ENCODE measurements at regions of chr17 and their contacts with region 1.

Region 1: DNA sequence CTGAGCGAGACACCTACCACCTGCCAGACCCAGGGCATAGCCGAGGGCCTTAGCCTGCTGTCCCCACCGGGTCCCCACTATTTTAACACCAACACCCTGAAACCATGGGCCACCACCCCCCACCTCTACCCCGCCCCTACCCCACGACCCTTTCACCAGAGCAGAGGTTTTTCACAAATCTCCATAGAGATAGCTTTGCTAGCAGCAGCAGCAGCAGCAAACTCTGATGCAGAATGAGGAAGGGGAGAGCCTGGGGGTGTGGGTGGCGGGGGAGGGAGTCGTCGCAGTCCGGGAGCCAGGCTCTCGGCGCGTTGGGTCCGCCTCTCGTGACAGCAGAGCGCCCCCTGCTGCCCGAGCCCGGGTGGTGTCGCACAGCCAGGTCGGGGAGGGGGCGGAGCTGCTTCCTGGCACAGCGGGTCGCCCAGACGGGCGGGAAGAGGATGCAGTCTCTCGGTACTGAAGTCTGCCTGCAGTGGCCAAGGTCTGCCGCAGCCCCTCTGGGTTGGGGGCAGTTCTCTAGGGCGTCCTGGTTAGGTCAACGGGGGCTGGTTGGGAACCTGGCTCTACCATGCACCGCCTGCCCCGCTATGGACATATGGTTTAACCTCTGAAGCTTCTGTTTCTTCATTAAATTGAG is 38.1 kb upstream of the CCDC182 start:
- DNase-seq: peak; percentile 95
- ATAC-seq: peak; percentile 95
- H3K4me3 Mint-ChIP-seq: peak overlapping the region; percentile 17
- H3K27ac Mint-ChIP-seq: no peak overlapping the region
- H3K4me1 Mint-ChIP-seq: peaks cover 9% of the 10 kb centered on the region
- H3K27me3 Mint-ChIP-seq: peaks cover 19% of the 10 kb centered on the region
- CTCF ChIP-seq: peak; percentile 93

Region 2: GRCh38 chr17:57597531-57598453 is 185.4 kb before region 1 on chr17:
- CTCF ChIA-PET with region 1: interaction called, 10 read pairs
- POLR2A ChIA-PET with region 1: no interaction called
- DNase-seq: peak; percentile 80
- ATAC-seq: peak; percentile 74
- H3K4me3 Mint-ChIP-seq: no peak overlapping the region
- H3K27ac Mint-ChIP-seq: peak overlapping the region; percentile 54; the same call in 1 of the 2 replicates
- H3K4me1 Mint-ChIP-seq: peaks cover 14% of the 10 kb centered on the region
- H3K27me3 Mint-ChIP-seq: no peaks in the 10 kb centered on the region
- CTCF ChIP-seq: peak; percentile 56; the same call in 1 of the 2 replicates

Region 3: DNA sequence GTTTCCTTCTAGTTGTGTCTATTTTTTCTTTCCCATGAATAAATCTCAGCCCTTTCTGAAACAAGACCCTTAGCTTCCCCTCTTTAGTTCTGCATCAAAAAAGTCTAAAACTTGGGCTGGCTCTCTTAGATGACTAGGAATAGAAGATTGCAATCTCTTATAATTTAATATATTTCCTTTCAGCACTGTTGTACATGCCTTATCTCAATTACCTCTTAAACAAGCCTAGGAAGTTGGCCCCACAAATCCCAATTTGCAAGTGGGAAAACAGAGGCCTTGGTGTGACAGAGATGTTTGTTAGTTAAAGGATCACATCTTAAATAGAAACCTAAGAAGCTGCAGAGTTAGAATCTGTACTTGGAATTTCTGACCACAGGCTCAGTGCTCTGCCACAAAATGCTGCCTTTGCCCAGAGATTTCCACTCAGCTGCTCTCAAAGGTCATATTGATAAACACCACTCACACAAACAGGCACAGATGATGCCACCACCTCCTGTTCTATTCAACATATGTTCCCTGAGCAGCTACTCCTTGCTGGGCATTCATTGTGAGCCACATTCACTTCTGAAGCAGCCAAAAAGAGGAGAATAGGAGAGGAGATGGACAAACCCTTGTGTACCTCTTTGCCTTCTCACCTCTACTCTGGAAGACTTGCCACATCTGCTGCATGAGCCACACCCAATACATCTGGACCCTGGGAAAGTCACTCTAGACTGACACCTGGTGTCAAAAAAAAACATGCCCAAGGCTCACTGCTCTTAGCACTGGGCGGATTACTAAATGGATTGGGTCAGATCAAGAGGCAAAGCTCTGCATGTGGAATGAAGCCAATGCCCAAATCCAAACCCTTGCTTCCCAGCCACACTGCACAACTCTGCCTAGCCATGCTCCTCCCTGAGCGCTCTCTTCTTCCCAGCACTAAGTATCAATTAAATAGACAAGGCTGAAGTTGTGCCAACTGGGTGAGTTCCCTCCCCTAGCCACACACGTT is 43.5 kb before region 1 on chr17:
- CTCF ChIA-PET with region 1: interaction called, 12 read pairs
- POLR2A ChIA-PET with region 1: no interaction called
- DNase-seq: no peak
- ATAC-seq: peak; percentile 87
- H3K4me3 Mint-ChIP-seq: no peak overlapping the region
- H3K27ac Mint-ChIP-seq: no peak overlapping the region
- H3K4me1 Mint-ChIP-seq: no peaks in the 10 kb centered on the region
- H3K27me3 Mint-ChIP-seq: no peaks in the 10 kb centered on the region
- CTCF ChIP-seq: no peak

Region 4: DNA sequence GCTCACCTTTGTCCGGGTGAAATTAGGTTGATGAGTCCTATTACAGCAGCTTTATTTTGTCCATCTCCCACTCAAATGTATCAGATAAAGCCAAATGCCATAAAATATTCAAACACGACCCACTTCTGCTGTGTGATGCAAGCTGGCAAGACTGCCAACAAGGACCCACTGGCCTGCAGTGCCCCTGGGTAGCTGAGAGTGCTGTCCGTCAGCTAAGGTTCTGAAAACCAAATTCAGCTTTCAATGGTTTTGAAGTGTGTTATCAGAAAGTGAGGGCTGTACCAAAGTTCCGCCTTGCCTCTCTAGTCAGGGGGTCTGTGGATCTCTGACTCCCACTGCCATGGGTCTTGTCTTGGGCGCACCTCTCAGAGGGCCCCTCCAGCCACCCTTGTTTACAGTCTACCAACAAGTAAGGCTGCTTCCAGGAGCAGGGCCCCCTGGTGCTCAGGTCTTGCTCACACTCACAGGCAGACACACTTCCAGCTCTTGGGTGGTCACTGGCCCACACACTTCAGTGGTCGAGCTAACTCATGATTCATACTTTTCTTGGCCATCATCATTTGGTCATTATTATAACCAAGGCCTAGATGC is 27.6 kb before region 1 on chr17:
- CTCF ChIA-PET with region 1: interaction called, 13 read pairs
- POLR2A ChIA-PET with region 1: no interaction called
- DNase-seq: no peak
- ATAC-seq: no peak
- H3K4me3 Mint-ChIP-seq: no peak overlapping the region
- H3K27ac Mint-ChIP-seq: no peak overlapping the region
- H3K4me1 Mint-ChIP-seq: peaks cover 3% of the 10 kb centered on the region
- H3K27me3 Mint-ChIP-seq: no peaks in the 10 kb centered on the region
- CTCF ChIP-seq: no peak

Region 5: GRCh38 chr17:57772774-57773173 is 10.4 kb before region 1 on chr17:
- CTCF ChIA-PET with region 1: interaction called, 45 read pairs
- POLR2A ChIA-PET with region 1: no interaction called
- DNase-seq: no peak
- ATAC-seq: peak; percentile 60; the same call in 1 of the 2 replicates
- H3K4me3 Mint-ChIP-seq: no peak overlapping the region
- H3K27ac Mint-ChIP-seq: no peak overlapping the region
- H3K4me1 Mint-ChIP-seq: peaks cover 6% of the 10 kb centered on the region
- H3K27me3 Mint-ChIP-seq: peaks cover 25% of the 10 kb centered on the region
- CTCF ChIP-seq: no peak

Region 6: DNA sequence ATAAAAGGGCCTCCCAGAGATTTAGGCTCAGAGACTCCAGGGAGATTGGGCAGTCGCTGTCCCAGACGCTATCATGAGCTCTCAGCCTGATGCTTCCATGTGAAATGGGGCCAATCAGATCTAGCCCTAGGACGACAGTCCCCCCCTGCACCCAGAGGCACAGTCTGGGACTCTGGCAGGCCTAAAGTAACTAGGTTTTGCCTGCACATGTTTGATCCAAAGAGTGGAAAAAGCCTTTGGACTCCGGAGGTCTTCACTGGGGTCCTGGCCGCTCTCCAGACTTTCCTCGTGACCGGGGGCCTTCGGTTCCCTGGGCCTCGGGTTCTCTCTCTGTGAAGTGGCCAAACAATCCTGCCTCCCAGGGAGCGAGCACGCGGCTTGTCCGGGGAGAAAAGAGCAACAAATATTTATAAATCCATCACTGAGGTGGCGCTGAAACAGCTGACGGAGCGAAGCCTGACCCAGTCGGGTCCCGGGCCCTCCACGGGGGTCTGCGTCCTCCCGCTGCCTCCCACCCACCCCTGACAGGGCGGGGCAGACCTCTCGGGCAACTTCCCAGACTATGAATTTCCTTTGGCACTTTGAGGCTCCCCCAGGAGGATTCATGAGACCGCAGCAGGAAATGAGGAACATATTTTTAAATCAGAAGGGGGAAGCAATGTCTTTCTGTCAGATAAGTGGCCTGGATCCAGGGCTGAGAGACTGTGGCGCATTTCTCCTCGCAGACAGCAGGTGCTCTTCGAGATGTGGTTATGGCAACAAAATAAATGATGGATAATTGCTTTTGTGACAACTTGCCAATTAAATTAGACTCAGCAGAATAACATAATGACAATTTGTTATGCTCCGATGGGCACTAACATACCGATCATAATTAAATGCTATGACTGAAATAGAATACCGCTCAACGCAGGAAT is 27.8 kb after region 1 on chr17:
- CTCF ChIA-PET with region 1: interaction called, 11 read pairs
- POLR2A ChIA-PET with region 1: no interaction called
- DNase-seq: no peak
- ATAC-seq: peak; percentile 41
- H3K4me3 Mint-ChIP-seq: no peak overlapping the region
- H3K27ac Mint-ChIP-seq: no peak overlapping the region
- H3K4me1 Mint-ChIP-seq: peaks cover 16% of the 10 kb centered on the region
- H3K27me3 Mint-ChIP-seq: peaks cover 5% of the 10 kb centered on the region
- CTCF ChIP-seq: no peak

Region 7: GRCh38 chr17:57833179-57833939 is 50.1 kb after region 1 on chr17:
- CTCF ChIA-PET with region 1: interaction called, 78 read pairs
- POLR2A ChIA-PET with region 1: interaction called, 4 read pairs
- DNase-seq: peak; percentile 69
- ATAC-seq: peak; percentile 81
- H3K4me3 Mint-ChIP-seq: no peak overlapping the region
- H3K27ac Mint-ChIP-seq: no peak overlapping the region
- H3K4me1 Mint-ChIP-seq: peaks cover 16% of the 10 kb centered on the region
- H3K27me3 Mint-ChIP-seq: no peaks in the 10 kb centered on the region
- CTCF ChIP-seq: peak; percentile 91

Measured in WTC11 (cell line).